HEK293T (cell line): ENCODE measurements at regions of chr2 and their contacts with region 1.

Region 1: GRCh38 chr2:25878361-25879132 is at the start of gene ASXL2:
- DNase-seq: peak; percentile 97

Region 2: GRCh38 chr2:25690058-25690457 is 188.5 kb before region 1 on chr2:
- CTCF ChIA-PET with region 1: no interaction called
- POLR2A ChIA-PET with region 1: no interaction called
- DNase-seq: no peak

Region 3: GRCh38 chr2:25794544-25795276 is 83.8 kb before region 1 on chr2:
- CTCF ChIA-PET with region 1: no interaction called
- POLR2A ChIA-PET with region 1: no interaction called
- DNase-seq: no peak

Region 4: DNA sequence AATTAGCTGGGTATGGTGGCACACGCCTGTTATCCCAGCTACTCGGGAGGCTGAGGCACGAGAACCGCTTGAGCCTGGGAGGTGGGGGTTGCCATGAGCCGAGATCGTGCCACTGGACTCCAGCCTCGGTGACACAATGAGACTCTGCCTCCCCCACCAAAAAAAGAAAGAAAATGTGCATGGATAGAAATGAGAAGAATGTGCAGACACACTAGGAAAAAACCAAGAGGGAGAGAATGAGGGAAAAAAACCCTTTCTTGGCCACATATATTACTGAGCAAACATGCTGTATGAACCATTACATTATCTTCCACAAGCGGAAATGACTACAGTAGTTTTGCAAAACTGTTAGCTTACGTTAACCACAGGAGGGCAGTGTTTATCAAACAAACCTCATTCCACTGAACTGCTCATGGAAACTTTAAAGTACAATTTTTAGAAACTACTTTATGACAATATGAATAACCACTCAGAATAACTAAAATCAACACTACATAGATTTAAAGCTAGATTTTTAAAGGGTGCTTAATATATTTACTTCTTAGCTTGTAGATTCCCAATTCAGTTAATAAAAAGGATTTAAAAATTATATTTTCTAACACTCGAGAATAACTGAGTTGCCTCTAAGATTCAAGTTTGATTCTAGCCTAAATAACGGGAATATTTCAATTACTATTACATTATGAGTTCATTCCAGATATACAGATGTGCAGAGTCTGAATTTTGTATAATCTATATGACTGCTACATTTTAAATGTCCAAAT is 26.6 kb before region 1 on chr2:
- CTCF ChIA-PET with region 1: no interaction called
- POLR2A ChIA-PET with region 1: interaction called, 18 read pairs
- DNase-seq: peak; percentile 40

Region 5: DNA sequence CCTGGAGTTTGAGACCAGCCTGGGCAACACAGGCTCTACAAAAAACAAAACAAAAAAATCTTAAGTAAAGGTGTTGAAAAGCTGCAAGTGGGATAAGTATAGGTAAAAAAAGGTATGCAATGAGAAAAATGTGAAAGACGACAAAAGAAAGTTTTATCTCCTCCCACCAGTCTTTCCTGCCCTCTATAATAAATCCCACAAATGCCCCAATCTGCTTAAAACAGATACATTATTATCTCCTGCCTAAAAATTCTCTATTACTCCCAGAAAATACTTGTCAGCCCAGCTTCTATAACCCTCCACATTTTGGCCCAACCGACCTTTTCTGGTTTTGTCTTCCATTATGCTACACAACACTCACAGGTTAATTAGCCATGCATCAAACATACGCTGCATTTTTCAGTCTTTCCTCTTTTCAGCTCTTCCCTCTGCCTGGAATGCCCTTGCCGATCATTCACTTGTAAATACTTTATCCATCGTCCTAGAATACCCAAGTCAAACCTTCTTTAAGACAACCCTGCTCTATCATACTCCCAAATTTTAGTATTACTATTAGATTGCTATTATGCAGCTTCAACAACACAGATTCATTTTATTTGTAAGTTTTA is 11.0 kb before region 1 on chr2:
- CTCF ChIA-PET with region 1: no interaction called
- POLR2A ChIA-PET with region 1: interaction called, 10 read pairs
- DNase-seq: no peak

Region 6: DNA sequence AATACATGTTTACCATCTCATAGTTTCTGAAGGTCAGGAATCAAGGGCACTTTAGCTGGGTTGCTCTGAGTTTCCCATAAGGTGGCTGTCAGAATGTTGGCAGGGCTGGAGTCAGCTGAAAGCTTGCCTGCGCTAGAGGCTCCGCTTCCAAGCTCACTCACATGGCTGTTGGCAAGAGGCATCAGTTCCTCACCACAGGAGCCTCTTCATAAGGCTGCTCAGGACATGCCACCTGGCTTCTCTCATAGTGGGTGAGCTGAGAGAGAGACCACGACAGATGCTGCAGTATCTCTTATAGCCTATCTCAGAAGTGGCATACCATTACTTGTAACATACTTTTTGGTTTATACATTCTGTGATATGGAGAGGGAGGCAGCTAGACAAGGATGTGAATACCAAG is 373.3 kb after region 1 on chr2:
- CTCF ChIA-PET with region 1: no interaction called
- POLR2A ChIA-PET with region 1: no interaction called
- DNase-seq: no peak